ENCODE measurements at regions of chr14 and their contacts with region 1.

Region 1: GRCh38 chr14:53929871-53930715 is 26.5 kb downstream of the BMP4 start:
- DNase-seq: peak; percentile 8 to 22 (median 11)
- ATAC-seq: 0 out of 3 replicates have a peak, but pooled peaks have one; percentile 39
- H3K4me3 ChIP-seq: no peak overlapping the region
- H3K27ac ChIP-seq: no peak overlapping the region
- H3K4me1 ChIP-seq: no peaks in the 10 kb centered on the region
- H3K27me3 ChIP-seq: no peaks in the 10 kb centered on the region
- CTCF ChIP-seq: peak; percentile 33 to 61 (median 46); a peak in 5 of 6 replicates
- EP300 ChIP-seq: no peak
- POLR2A ChIP-seq: no peak
- RAD21 ChIP-seq: no peak

Region 2: GRCh38 chr14:53570411-53571387 is 359.4 kb before region 1 on chr14:
- CTCF ChIA-PET with region 1: no interaction called
- POLR2A ChIA-PET with region 1: no interaction called
- in situ Hi-C with region 1: no loop called
- intact Hi-C with region 1: no loop called
- DNase-seq: no peak
- ATAC-seq: no peak
- H3K4me3 ChIP-seq: no peak overlapping the region
- H3K27ac ChIP-seq: no peak overlapping the region
- H3K4me1 ChIP-seq: no peaks in the 10 kb centered on the region
- H3K27me3 ChIP-seq: no peaks in the 10 kb centered on the region
- CTCF ChIP-seq: no peak
- EP300 ChIP-seq: no peak
- POLR2A ChIP-seq: no peak
- RAD21 ChIP-seq: no peak

Region 3: GRCh38 chr14:54175298-54175942 is 245.3 kb after region 1 on chr14:
- CTCF ChIA-PET with region 1: no interaction called
- POLR2A ChIA-PET with region 1: no interaction called
- in situ Hi-C with region 1: no loop called
- intact Hi-C with region 1: loop called (anchors 10 kb)
- DNase-seq: peak; percentile 41 to 58 (median 42)
- ATAC-seq: peak; percentile 74
- H3K4me3 ChIP-seq: no peak overlapping the region
- H3K27ac ChIP-seq: no peak overlapping the region
- H3K4me1 ChIP-seq: no peaks in the 10 kb centered on the region
- H3K27me3 ChIP-seq: no peaks in the 10 kb centered on the region
- CTCF ChIP-seq: peak; percentile 46 to 64 (median 57); a peak in 5 of 6 replicates
- EP300 ChIP-seq: no peak
- POLR2A ChIP-seq: no peak
- RAD21 ChIP-seq: peak; percentile 42 to 63; a peak in 3 of 4 replicates